Activated T-helper 2 cell treated with anti-CD3 and anti-CD28 coated beads, Interferon-gamma antibody, Interleukin-2, Interleukin-4, amounts not matched to agents 10 μg/mL and 5 μg/mL and 100 μg/mL, durations not matched to agents 14 hours and 24 hours and 36 hours (primary cell): ENCODE measurements at regions of chr15 and their contacts with region 1.

Region 1: DNA sequence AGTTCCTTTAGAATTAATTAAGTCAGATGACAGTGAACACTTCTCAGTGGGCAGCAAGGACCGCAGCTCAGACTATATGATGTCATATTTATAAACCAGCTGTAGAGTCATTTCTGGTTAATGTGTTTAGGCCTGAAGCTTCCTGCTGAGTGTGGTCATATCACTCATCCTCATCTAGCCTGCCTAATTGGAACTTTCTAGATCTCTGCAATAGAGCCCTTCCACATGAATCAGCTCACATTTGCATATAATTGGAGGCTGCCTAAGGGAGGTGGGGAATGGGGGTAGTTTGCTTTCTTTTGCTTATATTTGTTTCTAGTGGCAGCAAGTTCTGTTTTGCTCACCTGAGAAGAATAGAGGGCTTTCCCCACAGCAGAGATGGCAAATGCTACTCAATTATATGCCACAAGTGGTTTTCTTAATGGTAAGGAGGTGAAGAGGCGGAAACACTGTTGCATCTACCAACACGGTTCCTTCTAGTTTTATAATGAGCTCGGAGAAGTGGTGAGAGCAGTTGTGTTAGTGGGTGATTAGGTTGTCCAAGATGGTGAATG is 148.1 kb downstream of the KLHL25 start:
- DNase-seq: peak; percentile 20
- H3K4me3 Mint-ChIP-seq: peak overlapping the region; percentile 9
- H3K27ac Mint-ChIP-seq: peak overlapping the region; percentile 89
- H3K4me1 Mint-ChIP-seq: peaks cover 42% of the 10 kb centered on the region
- H3K27me3 Mint-ChIP-seq: no peaks in the 10 kb centered on the region

Region 2: GRCh38 chr15:85412956-85413854 is 233.4 kb before region 1 on chr15:
- intact Hi-C with region 1: no loop called
- DNase-seq: peak; percentile 71
- H3K4me3 Mint-ChIP-seq: peak overlapping the region; percentile 55
- H3K27ac Mint-ChIP-seq: peak overlapping the region; percentile 87
- H3K4me1 Mint-ChIP-seq: peaks cover 64% of the 10 kb centered on the region
- H3K27me3 Mint-ChIP-seq: no peaks in the 10 kb centered on the region

Region 3: DNA sequence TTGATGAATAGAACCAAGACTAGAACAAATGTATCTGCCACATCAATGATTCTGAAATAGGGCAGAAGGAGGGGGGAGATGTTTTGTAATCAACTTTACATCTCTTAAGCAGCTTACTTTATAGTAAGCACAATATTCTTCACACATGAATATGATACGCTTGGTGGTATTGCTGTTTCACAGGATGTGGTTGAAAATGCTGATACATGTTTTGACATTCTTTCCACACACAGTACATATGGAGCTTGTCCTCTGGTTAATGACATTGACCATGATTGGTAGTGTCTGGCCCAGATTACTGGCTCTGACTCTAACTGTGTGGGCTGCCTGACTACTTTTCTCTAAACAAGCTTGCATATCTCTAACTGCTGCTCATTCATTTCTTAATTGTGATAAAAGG is 20.8 kb before region 1 on chr15:
- intact Hi-C with region 1: loop called (anchors 1 kb)
- DNase-seq: no peak
- H3K4me3 Mint-ChIP-seq: peak overlapping the region; percentile 42
- H3K27ac Mint-ChIP-seq: peak overlapping the region; percentile 91
- H3K4me1 Mint-ChIP-seq: peaks cover 72% of the 10 kb centered on the region
- H3K27me3 Mint-ChIP-seq: no peaks in the 10 kb centered on the region

Region 4: GRCh38 chr15:85667491-85668424 is 21.1 kb after region 1 on chr15:
- intact Hi-C with region 1: loop called (anchors 1 kb)
- DNase-seq: peak; percentile 57
- H3K4me3 Mint-ChIP-seq: no peak overlapping the region
- H3K27ac Mint-ChIP-seq: peak overlapping the region; percentile 91
- H3K4me1 Mint-ChIP-seq: peaks cover 19% of the 10 kb centered on the region
- H3K27me3 Mint-ChIP-seq: no peaks in the 10 kb centered on the region

Region 5: DNA sequence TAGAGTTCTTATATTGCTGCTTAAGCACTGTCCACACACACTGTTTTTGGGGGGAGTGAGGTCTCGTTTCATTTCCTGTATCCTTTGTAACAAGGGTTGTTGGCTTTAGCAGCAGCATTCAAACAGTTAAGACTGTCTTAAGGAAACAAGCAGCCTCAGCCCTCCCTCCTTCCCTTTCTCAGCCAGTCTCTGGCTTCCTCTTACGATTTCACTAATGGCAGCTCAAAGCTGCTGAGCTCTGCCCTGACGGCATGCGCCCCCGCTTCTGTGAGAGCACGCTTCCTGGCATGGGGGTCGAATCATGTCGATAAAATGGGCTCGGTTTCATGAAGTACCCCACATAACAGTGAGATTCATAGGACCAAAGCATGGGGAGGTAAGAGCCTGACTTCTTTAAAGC is 43.1 kb after region 1 on chr15:
- intact Hi-C with region 1: loop called (anchors 1 kb)
- DNase-seq: peak; percentile 64
- H3K4me3 Mint-ChIP-seq: peak overlapping the region; percentile 94
- H3K27ac Mint-ChIP-seq: peak overlapping the region; percentile 100
- H3K4me1 Mint-ChIP-seq: peaks cover 70% of the 10 kb centered on the region
- H3K27me3 Mint-ChIP-seq: no peaks in the 10 kb centered on the region

Region 6: DNA sequence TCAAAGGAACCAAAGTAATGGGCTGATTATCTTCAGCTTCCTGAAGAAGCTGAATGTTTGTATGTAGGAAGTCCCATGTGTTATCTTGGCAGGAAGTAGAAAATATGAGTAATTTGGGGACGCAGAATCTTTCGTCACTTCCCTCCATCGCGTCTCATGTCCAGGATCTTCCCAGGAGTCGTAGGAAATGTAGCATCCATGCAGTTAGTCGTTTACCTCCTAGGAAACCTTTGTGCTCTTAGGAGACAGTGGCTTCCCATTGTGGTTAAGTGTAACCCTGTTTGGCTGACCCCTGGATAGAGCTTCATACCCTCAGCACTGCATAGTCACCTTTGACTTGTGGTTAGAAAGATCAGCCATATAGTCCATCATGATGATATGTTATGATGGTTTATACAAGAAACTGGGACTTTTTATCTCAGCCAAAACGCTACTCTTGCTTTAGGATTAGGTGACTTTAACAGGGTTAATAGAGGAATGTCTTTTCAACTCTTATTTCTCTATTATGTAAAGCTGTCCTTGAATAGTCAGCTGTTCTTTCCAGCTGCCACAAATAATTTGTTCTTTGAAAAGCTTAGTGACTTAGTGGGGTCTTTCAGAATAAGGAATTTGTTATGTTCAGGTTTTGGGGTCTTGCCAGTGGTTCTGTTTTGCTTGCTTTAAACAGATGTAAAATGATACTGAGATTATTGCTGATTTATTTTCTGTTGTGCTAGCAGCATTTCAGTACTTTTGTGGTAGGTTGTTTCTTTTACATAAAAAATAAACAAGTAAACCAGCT is 55.9 kb after region 1 on chr15:
- intact Hi-C with region 1: loop called (anchors 1 kb)
- DNase-seq: peak; percentile 39
- H3K4me3 Mint-ChIP-seq: peak overlapping the region; percentile 77
- H3K27ac Mint-ChIP-seq: peak overlapping the region; percentile 99
- H3K4me1 Mint-ChIP-seq: peaks cover 51% of the 10 kb centered on the region
- H3K27me3 Mint-ChIP-seq: no peaks in the 10 kb centered on the region

Region 7: DNA sequence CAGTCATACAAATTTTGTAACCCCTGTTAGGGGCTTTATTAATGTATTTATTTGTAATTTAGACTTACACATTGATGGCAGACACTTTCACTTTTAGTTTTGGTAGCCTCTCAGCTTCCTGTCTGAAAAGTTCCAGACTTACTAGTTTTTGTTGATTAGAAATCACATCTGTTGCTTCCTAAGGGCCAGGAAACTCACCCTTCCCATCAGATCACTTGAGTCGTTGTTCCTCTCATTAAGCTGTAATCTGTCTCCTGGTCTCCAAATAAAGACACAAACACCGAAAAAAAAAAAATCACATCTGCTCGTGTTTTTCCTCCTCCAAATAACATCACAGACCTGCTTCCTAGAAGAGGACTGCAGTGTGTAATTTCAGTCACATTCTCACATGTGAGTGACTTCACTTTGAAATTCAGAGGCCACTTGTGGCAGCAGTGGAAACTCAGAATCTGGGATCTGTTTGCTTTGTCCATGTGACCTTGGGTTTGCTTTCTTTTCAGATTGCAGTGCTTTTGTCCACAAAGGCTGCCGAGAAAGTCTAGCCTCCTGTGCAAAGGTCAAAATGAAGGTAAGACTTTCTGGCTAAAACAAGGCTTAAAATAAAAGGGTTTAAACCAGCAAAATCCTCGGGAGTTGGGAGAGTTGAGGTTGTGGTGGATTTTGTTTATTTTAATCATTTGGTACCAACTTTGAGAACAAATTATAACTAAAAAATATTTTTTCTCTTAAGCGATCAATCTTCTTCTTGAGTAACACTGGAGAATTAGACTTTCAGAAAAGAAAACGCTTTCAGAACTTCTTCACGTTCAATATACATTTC is 61.1 kb after region 1 on chr15:
- intact Hi-C with region 1: loop called (anchors 1 kb)
- DNase-seq: no peak
- H3K4me3 Mint-ChIP-seq: peak overlapping the region; percentile 80
- H3K27ac Mint-ChIP-seq: peak overlapping the region; percentile 98
- H3K4me1 Mint-ChIP-seq: peaks cover 74% of the 10 kb centered on the region
- H3K27me3 Mint-ChIP-seq: no peaks in the 10 kb centered on the region